CD8-positive, alpha-beta T cell (primary cell): ENCODE measurements at regions of chr10 and their contacts with region 1.

Region 1: GRCh38 chr10:22988581-22989360 is 60.9 kb downstream of the ARMC3 start:
- DNase-seq: peak; percentile 46 to 85 (median 74)
- ATAC-seq: peak; percentile 80
- H3K4me3 ChIP-seq: no peak overlapping the region
- H3K4me3 Mint-ChIP-seq: no peak overlapping the region
- H3K27ac ChIP-seq: no peak overlapping the region
- H3K27ac Mint-ChIP-seq: no peak overlapping the region
- H3K4me1 ChIP-seq: peaks cover 4% of the 10 kb centered on the region
- H3K4me1 Mint-ChIP-seq: peaks cover 14% of the 10 kb centered on the region
- H3K27me3 ChIP-seq: no peaks in the 10 kb centered on the region
- H3K27me3 Mint-ChIP-seq: peaks cover 2% of the 10 kb centered on the region
- CTCF ChIP-seq: peak; percentile 88

Region 2: GRCh38 chr10:22010973-22011408 is 977.8 kb before region 1 on chr10:
- CTCF ChIA-PET with region 1: interaction called, 95 read pairs
- POLR2A ChIA-PET with region 1: no interaction called
- intact Hi-C with region 1: loop called (anchors 1 to 2 kb)
- DNase-seq: peak in 2 of 9 experiments; percentile 33 to 49
- ATAC-seq: no peak
- H3K4me3 ChIP-seq: no peak overlapping the region
- H3K4me3 Mint-ChIP-seq: no peak overlapping the region
- H3K27ac ChIP-seq: no peak overlapping the region
- H3K27ac Mint-ChIP-seq: no peak overlapping the region
- H3K4me1 ChIP-seq: no peaks in the 10 kb centered on the region
- H3K4me1 Mint-ChIP-seq: no peaks in the 10 kb centered on the region
- H3K27me3 ChIP-seq: no peaks in the 10 kb centered on the region
- H3K27me3 Mint-ChIP-seq: peaks cover 1% of the 10 kb centered on the region
- CTCF ChIP-seq: peak; percentile 63

Region 3: GRCh38 chr10:22251751-22252223 is 737.0 kb before region 1 on chr10:
- CTCF ChIA-PET with region 1: no interaction called
- POLR2A ChIA-PET with region 1: no interaction called
- intact Hi-C with region 1: loop called in 1 of 2 experiments (anchors 10 kb)
- DNase-seq: peak; percentile 25 to 82 (median 63)
- ATAC-seq: peak; percentile 59
- H3K4me3 ChIP-seq: peak overlapping the region; percentile 59 to 67
- H3K4me3 Mint-ChIP-seq: peak overlapping the region; percentile 94
- H3K27ac ChIP-seq: peak overlapping the region; percentile 77 to 85
- H3K27ac Mint-ChIP-seq: peak overlapping the region; percentile 98
- H3K4me1 ChIP-seq: peaks cover 6% of the 10 kb centered on the region
- H3K4me1 Mint-ChIP-seq: peaks cover 24% of the 10 kb centered on the region
- H3K27me3 ChIP-seq: peaks cover 9 to 10% of the 10 kb centered on the region in 2 experiments
- H3K27me3 Mint-ChIP-seq: peaks cover 30% of the 10 kb centered on the region
- CTCF ChIP-seq: no peak

Region 4: DNA sequence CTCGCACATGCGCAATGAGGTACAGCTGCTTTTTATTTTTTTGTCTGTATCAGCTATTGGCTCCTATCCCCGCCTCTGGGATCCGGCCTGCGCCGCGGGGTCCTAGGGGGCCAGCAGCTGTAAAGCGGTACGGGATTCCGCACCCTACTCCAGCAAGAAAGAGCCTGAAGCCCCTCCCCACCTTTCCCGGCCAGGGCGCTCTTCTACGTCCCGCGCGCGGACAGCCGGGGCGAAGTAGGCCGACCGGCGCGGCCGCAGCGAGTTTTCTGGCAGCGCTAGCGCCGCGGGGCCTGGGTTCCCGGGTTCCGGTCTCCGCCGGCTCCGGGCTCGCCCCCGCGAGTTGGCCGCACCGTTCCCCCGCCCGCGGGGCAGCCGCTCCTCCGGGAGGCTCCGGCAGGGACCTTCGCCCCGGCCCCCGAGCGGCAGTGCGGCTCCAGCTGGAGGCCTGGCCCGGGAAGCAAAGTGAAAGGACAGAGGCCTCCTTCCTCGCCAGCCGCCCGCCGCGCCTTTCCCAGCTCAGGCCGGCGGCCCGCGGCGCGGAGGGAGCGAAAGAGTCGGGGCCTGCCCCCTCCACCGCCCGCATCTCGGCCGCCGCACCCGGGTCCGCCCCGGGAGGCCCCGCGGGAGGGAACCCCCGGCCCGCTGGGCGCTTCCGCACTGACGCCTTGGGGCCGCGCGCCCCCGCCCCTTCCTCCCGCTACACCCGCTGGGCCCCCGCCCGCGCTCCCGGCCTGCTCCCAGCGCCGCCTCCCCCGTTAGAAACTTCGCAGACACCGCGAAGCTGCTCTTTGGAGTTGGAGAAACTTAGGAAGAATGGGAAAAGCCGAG is 648.2 kb before region 1 on chr10:
- CTCF ChIA-PET with region 1: interaction called, 3 read pairs
- POLR2A ChIA-PET with region 1: no interaction called
- intact Hi-C with region 1: loop called in 1 of 2 experiments (anchors 5 kb)
- DNase-seq: peak in 6 of 9 experiments; percentile 50 to 75 (median 64)
- ATAC-seq: peak; percentile 39
- H3K4me3 ChIP-seq: peak overlapping the region; percentile 50 to 70
- H3K4me3 Mint-ChIP-seq: peak overlapping the region; percentile 87
- H3K27ac ChIP-seq: peak overlapping the region; percentile 25 to 40
- H3K27ac Mint-ChIP-seq: peak overlapping the region; percentile 84
- H3K4me1 ChIP-seq: peaks cover 18% of the 10 kb centered on the region
- H3K4me1 Mint-ChIP-seq: peaks cover 14% of the 10 kb centered on the region
- H3K27me3 ChIP-seq: peaks cover 74 to 87% of the 10 kb centered on the region in 2 experiments
- H3K27me3 Mint-ChIP-seq: peaks cover 67% of the 10 kb centered on the region
- CTCF ChIP-seq: no peak

Region 5: DNA sequence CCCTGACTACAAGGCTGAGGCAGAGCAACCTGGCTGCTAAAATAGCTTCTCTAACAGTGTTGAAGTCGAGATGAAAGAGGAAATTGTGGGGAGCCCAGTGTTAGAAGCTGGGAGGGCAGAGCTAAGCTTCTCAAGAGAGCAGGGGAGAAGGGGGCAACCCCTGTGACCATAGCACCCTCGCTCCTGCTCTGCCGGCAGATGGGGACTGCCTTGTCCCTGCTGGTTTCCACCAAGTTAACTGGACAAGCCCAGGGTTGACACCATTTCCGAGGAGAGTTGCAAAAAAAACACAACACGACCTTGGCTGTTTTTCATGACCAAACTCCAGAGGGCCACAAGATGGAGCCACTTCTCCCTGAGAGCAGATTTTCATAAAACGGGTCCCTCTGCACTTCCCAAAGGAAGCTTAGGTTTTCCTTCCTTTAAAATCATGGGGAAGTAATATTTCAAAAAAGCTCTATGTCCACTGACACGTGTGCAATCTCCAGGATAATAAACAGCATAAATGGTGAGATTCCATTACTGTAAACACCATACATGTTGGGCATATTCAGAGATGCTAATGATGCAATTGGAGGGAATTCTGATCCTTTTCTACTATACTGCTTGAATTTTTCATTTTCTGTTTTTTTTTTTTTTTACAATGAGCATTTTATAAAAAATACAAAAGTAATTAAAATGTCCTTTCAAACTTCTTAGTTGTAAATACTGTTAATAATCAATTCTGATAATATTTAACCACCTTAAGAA is 414.8 kb before region 1 on chr10:
- CTCF ChIA-PET with region 1: interaction called, 91 read pairs
- POLR2A ChIA-PET with region 1: interaction called, 3 read pairs
- intact Hi-C with region 1: loop called (anchors 1 kb)
- DNase-seq: peak in 7 of 9 experiments; percentile 2 to 82 (median 43)
- ATAC-seq: peak; percentile 64
- H3K4me3 ChIP-seq: no peak overlapping the region
- H3K4me3 Mint-ChIP-seq: peak overlapping the region; percentile 71
- H3K27ac ChIP-seq: peak overlapping the region in 1 of 2 experiments; percentile 63
- H3K27ac Mint-ChIP-seq: peak overlapping the region; percentile 94
- H3K4me1 ChIP-seq: peaks cover 35% of the 10 kb centered on the region
- H3K4me1 Mint-ChIP-seq: peaks cover 73% of the 10 kb centered on the region
- H3K27me3 ChIP-seq: no peaks in the 10 kb centered on the region
- H3K27me3 Mint-ChIP-seq: no peaks in the 10 kb centered on the region
- CTCF ChIP-seq: peak; percentile 79

Region 6: GRCh38 chr10:22780474-22780885 is 208.3 kb before region 1 on chr10:
- CTCF ChIA-PET with region 1: no interaction called
- POLR2A ChIA-PET with region 1: no interaction called
- intact Hi-C with region 1: no loop called
- DNase-seq: no peak
- ATAC-seq: no peak
- H3K4me3 ChIP-seq: no peak overlapping the region
- H3K4me3 Mint-ChIP-seq: no peak overlapping the region
- H3K27ac ChIP-seq: no peak overlapping the region
- H3K27ac Mint-ChIP-seq: no peak overlapping the region
- H3K4me1 ChIP-seq: no peaks in the 10 kb centered on the region
- H3K4me1 Mint-ChIP-seq: peaks cover 6% of the 10 kb centered on the region
- H3K27me3 ChIP-seq: no peaks in the 10 kb centered on the region
- H3K27me3 Mint-ChIP-seq: no peaks in the 10 kb centered on the region
- CTCF ChIP-seq: no peak

Region 7: GRCh38 chr10:22874189-22874854 is 114.4 kb before region 1 on chr10:
- CTCF ChIA-PET with region 1: no interaction called
- POLR2A ChIA-PET with region 1: no interaction called
- intact Hi-C with region 1: no loop called
- DNase-seq: no peak
- ATAC-seq: no peak
- H3K4me3 ChIP-seq: no peak overlapping the region
- H3K4me3 Mint-ChIP-seq: no peak overlapping the region
- H3K27ac ChIP-seq: no peak overlapping the region
- H3K27ac Mint-ChIP-seq: no peak overlapping the region
- H3K4me1 ChIP-seq: peaks cover 5% of the 10 kb centered on the region
- H3K4me1 Mint-ChIP-seq: peaks cover 10% of the 10 kb centered on the region
- H3K27me3 ChIP-seq: no peaks in the 10 kb centered on the region
- H3K27me3 Mint-ChIP-seq: no peaks in the 10 kb centered on the region
- CTCF ChIP-seq: no peak